ENCODE measurements at regions of chr10 and their contacts with region 1.

Region 1: DNA sequence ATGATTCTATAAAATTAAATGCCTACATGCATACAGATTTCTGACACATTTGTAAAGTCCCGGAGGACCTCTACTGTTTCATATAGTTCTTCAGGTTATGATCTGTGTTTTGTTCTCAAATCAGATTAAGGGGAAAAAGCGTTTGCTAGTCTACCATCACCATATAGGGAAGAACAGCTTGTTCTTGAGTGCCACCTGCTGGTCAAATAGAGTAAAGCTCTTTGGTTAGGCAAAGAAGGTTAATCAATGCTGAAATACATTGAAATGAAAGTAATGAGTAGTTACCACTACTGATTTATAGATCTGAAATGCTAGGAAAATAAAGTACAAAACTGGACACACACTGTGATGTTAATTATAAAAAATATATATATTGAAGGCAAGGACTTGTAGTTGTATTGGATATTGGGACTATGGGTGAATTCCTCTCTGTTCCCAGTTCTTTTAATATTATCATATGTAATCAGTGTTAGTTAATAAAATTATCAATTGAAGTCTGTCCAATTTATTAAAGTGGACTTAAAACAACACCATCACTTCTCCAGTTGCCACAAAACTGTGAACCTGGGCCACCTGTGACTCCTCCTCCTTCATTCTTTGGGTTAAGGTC is 72.6 kb upstream of the PDLIM1 start:
- DNase-seq: peak; percentile 52 to 74
- H3K4me3 ChIP-seq: no peak overlapping the region
- H3K4me3 Mint-ChIP-seq: no peak overlapping the region
- H3K27ac Mint-ChIP-seq: peak overlapping the region; percentile 31
- H3K4me1 ChIP-seq: peaks cover 37% of the 10 kb centered on the region
- H3K4me1 Mint-ChIP-seq: peaks cover 31% of the 10 kb centered on the region
- H3K27me3 ChIP-seq: no peaks in the 10 kb centered on the region
- H3K27me3 Mint-ChIP-seq: no peaks in the 10 kb centered on the region
- CTCF ChIP-seq: peak; percentile 83 to 91

Region 2: DNA sequence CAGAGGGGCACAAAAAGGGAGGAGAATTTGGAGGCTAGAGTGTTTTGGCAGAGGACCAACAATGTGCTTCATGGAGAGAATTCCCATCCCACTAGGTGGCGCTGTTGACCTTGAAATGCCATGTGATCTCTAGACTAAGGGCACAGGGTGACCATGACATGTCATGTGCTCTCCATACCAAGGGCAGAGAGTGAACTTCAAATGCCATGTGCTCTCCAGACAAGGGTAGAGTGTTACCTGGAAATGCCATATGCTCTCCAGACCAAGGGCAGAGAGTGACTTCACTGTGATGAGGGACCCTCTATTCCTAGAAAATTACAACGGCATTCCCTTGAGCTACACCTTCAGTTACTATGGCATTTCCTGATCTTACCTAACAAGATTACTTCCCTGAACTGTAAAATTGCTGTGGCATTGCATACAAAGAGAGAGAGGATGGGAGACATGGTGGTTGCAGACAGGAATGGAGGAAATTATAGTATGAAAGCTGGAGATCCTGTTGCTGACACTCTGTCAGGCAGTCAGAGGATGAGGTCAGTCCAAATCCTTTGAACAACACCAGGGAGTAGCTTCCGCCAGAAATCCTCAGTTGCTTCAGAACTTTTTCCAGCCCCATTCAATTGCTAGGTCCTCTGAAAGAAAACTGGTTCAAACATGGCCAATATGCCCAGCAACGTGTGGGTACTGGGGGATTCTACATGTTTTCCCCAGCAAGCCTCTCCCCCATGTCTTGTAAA is 230.2 kb before region 1 on chr10:
- CTCF ChIA-PET with region 1: interaction called, 5 read pairs
- POLR2A ChIA-PET with region 1: no interaction called
- intact Hi-C with region 1: loop called (anchors 1 kb)
- DNase-seq: peak; percentile 86 to 89
- H3K4me3 ChIP-seq: no peak overlapping the region
- H3K4me3 Mint-ChIP-seq: no peak overlapping the region
- H3K27ac Mint-ChIP-seq: peak overlapping the region; percentile 53
- H3K4me1 ChIP-seq: peaks cover 22% of the 10 kb centered on the region
- H3K4me1 Mint-ChIP-seq: peaks cover 22% of the 10 kb centered on the region
- H3K27me3 ChIP-seq: no peaks in the 10 kb centered on the region
- H3K27me3 Mint-ChIP-seq: no peaks in the 10 kb centered on the region
- CTCF ChIP-seq: peak; percentile 77 to 94

Region 3: GRCh38 chr10:95260397-95260881 is 103.0 kb before region 1 on chr10:
- CTCF ChIA-PET with region 1: interaction called, 3 read pairs
- POLR2A ChIA-PET with region 1: interaction called, 3 read pairs
- intact Hi-C with region 1: loop called (anchors 5 kb)
- DNase-seq: peak; percentile 82 to 87
- H3K4me3 ChIP-seq: no peak overlapping the region
- H3K4me3 Mint-ChIP-seq: no peak overlapping the region
- H3K27ac Mint-ChIP-seq: peak overlapping the region; percentile 75
- H3K4me1 ChIP-seq: peaks cover 54% of the 10 kb centered on the region
- H3K4me1 Mint-ChIP-seq: peaks cover 54% of the 10 kb centered on the region
- H3K27me3 ChIP-seq: no peaks in the 10 kb centered on the region
- H3K27me3 Mint-ChIP-seq: no peaks in the 10 kb centered on the region
- CTCF ChIP-seq: no peak

Region 4: DNA sequence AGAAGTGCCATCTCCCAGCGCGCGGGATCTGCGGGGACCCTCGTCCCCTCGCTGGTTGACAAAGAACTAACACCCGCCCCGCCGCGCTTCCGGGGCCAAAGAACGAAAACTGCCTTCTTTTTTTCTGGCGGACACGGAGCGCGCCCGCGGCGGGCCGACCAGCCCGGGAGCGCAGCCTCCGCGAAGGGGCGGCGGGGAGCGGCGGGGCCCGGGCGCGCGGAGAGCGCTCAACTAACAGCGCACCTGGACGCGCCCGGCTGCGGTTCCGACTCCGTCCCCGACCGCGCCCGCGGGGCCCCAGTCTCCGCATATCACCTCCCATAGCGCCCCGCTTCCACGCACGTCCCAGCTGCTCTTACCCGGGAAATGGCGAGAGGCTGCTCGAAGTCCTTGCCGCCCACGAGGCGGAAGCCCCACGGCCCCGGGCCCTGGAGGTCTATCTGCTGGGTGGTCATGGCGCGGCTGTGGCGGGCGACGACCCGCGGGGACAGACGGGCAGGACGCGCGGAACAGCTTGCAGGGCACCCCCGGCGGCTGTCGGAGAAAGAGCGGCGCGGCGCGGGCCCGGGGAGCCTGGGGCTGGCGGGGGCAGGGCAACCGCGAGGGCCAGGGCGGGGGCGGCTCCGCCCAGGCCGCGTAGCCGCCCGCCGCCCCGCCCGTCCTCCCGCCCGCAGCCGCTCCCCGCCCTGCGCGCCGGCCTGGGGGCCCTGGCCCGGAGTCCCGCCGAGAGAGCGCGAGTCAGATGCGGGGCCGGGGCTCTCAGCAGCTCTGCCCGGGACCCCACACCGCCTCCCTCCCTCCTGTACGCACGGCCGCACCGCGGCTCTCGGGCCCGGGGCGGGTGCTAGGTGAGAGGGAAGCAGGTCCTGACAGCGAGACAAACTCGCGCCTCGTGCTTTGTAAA is 72.7 kb before region 1 on chr10 and contains the start of gene PDLIM1:
- CTCF ChIA-PET with region 1: interaction called, 12 read pairs
- POLR2A ChIA-PET with region 1: no interaction called
- intact Hi-C with region 1: loop called (anchors 2 kb)
- DNase-seq: peak; percentile 78 to 88
- H3K4me3 ChIP-seq: peak within 1 kb of the TSS; percentile 89
- H3K4me3 Mint-ChIP-seq: peak within 1 kb of the TSS; percentile 82
- H3K27ac Mint-ChIP-seq: peak within 1 kb of the TSS; percentile 87
- H3K4me1 ChIP-seq: peaks cover 43% of the 10 kb centered on the region
- H3K4me1 Mint-ChIP-seq: peaks cover 27% of the 10 kb centered on the region
- H3K27me3 ChIP-seq: no peaks in the 10 kb centered on the region
- H3K27me3 Mint-ChIP-seq: no peaks in the 10 kb centered on the region
- CTCF ChIP-seq: no peak
- total RNA-seq, gene PDLIM1: 417 and 506 TPM in 2 replicates

Region 5: DNA sequence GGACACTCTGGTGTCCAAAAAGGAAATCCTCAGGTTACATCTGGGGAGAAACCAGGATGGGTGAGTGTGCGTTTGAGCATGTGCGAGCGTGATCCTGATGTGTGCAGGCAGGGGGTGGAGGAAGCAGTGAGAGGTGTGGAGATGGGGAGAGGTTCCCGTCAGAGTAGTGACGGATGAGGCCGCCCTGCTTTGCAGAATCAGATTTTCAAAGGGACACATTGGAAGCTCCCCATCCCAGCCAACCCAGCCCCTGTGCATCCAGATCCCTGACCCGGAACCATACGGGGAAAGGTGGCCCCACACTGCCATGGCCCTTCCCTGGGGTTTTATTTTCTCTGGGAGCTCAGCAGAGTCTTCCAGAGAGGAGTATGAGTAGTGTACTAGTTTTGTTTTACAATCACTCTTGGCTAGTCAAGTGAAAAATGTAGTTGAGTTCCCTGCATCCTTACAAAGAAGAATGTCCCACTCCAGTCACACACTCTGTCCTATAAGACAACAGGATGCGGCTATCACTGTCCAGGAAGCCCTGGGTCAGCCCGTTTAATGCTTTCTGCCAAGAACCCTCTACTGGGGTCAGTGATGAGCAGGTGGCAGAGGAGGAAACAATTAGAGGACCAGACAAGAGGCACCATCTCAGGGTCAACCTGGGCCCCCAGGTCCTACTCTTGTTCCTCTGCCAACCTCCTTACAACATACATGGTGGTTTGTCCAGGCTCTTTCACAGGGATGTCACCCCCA is 25.8 kb before region 1 on chr10:
- CTCF ChIA-PET with region 1: interaction called, 33 read pairs
- POLR2A ChIA-PET with region 1: no interaction called
- intact Hi-C with region 1: loop called (anchors 1 kb)
- DNase-seq: no peak
- H3K4me3 ChIP-seq: no peak overlapping the region
- H3K4me3 Mint-ChIP-seq: no peak overlapping the region
- H3K27ac Mint-ChIP-seq: peak overlapping the region; percentile 18
- H3K4me1 ChIP-seq: peaks cover 42% of the 10 kb centered on the region
- H3K4me1 Mint-ChIP-seq: peaks cover 11% of the 10 kb centered on the region
- H3K27me3 ChIP-seq: no peaks in the 10 kb centered on the region
- H3K27me3 Mint-ChIP-seq: no peaks in the 10 kb centered on the region
- CTCF ChIP-seq: no peak

Region 6: DNA sequence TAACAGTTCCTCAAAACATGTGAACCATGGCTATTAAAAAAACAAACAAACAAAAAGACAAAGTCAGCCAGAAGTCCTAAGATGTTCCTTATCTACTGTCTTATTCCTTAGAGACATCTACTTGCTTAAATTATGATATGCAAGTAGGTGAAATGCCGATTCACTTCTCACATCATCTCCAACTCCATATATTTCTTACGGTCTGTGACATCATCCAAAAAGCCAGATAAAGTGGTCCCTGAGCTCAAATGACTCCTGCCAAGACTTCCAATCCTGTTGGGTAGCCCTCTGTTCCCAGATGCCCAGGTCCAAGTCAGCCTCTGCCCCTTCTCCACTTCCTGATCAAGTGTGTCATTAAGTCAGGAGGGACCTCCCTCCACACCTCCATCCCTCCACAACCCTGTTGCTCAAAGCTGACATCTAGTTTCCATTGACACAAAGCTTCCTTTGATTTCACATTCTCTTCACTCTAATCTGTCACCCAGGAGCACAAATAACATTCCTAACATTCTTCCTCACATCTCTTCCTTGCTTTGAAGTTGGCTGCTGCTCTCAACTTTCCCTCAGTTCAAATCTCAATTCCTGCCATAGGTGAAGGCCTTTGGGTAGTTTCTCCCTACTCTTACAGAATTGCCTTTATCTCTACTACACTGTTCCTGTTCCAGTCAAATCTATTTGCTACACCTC is 16.6 kb before region 1 on chr10:
- CTCF ChIA-PET with region 1: interaction called, 7 read pairs
- POLR2A ChIA-PET with region 1: interaction called, 7 read pairs
- intact Hi-C with region 1: loop called (anchors 1 kb)
- DNase-seq: peak; percentile 87 to 89
- H3K4me3 ChIP-seq: no peak overlapping the region
- H3K4me3 Mint-ChIP-seq: peak overlapping the region; percentile 57
- H3K27ac Mint-ChIP-seq: peak overlapping the region; percentile 93
- H3K4me1 ChIP-seq: peaks cover 66% of the 10 kb centered on the region
- H3K4me1 Mint-ChIP-seq: peaks cover 45% of the 10 kb centered on the region
- H3K27me3 ChIP-seq: no peaks in the 10 kb centered on the region
- H3K27me3 Mint-ChIP-seq: no peaks in the 10 kb centered on the region
- CTCF ChIP-seq: no peak

Region 7: GRCh38 chr10:95440756-95441546 is 77.5 kb after region 1 on chr10:
- CTCF ChIA-PET with region 1: no interaction called
- POLR2A ChIA-PET with region 1: no interaction called
- intact Hi-C with region 1: no loop called
- DNase-seq: no peak
- H3K4me3 ChIP-seq: no peak overlapping the region
- H3K4me3 Mint-ChIP-seq: no peak overlapping the region
- H3K27ac Mint-ChIP-seq: no peak overlapping the region
- H3K4me1 ChIP-seq: 0 out of 2 replicates have a peak, but pooled peaks cover 3% of the 10 kb centered on the region
- H3K4me1 Mint-ChIP-seq: peaks cover 11% of the 10 kb centered on the region
- H3K27me3 ChIP-seq: no peaks in the 10 kb centered on the region
- H3K27me3 Mint-ChIP-seq: no peaks in the 10 kb centered on the region
- CTCF ChIP-seq: no peak

Region 8: GRCh38 chr10:96700374-96701099 is 1337.1 kb after region 1 on chr10:
- CTCF ChIA-PET with region 1: no interaction called
- POLR2A ChIA-PET with region 1: no interaction called
- intact Hi-C with region 1: no loop called
- DNase-seq: no peak
- H3K4me3 ChIP-seq: no peak overlapping the region
- H3K4me3 Mint-ChIP-seq: no peak overlapping the region
- H3K27ac Mint-ChIP-seq: no peak overlapping the region
- H3K4me1 ChIP-seq: 0 out of 2 replicates have a peak, but pooled peaks cover 4% of the 10 kb centered on the region
- H3K4me1 Mint-ChIP-seq: no peaks in the 10 kb centered on the region
- H3K27me3 ChIP-seq: no peaks in the 10 kb centered on the region
- H3K27me3 Mint-ChIP-seq: no peaks in the 10 kb centered on the region
- CTCF ChIP-seq: no peak

Measured in Caco-2 (cell line).